ENCODE measurements at regions of chr3 and their contacts with region 1.

Region 1: GRCh38 chr3:109081746-109082510 is 36.0 kb downstream of the MORC1 start:
- DNase-seq: peak; percentile 10
- H3K4me3 ChIP-seq: no peak overlapping the region
- H3K27ac ChIP-seq: no peak overlapping the region
- H3K27me3 ChIP-seq: peaks cover 2% of the 10 kb centered on the region
- CTCF ChIP-seq: peak; percentile 90

Region 2: GRCh38 chr3:108662130-108662738 is 419.7 kb before region 1 on chr3:
- CTCF ChIA-PET with region 1: interaction called, 17 read pairs
- POLR2A ChIA-PET with region 1: no interaction called
- DNase-seq: peak; percentile 63
- H3K4me3 ChIP-seq: no peak overlapping the region
- H3K27ac ChIP-seq: no peak overlapping the region
- H3K27me3 ChIP-seq: no peaks in the 10 kb centered on the region
- CTCF ChIP-seq: peak; percentile 72

Region 3: GRCh38 chr3:109023656-109024254 is 58.2 kb before region 1 on chr3:
- CTCF ChIA-PET with region 1: interaction called, 53 read pairs
- POLR2A ChIA-PET with region 1: no interaction called
- DNase-seq: peak; percentile 13
- H3K4me3 ChIP-seq: no peak overlapping the region
- H3K27ac ChIP-seq: no peak overlapping the region
- H3K27me3 ChIP-seq: no peaks in the 10 kb centered on the region
- CTCF ChIP-seq: peak; percentile 77

Region 4: GRCh38 chr3:109059264-109059663 is 22.7 kb before region 1 on chr3:
- CTCF ChIA-PET with region 1: interaction called, 19 read pairs
- POLR2A ChIA-PET with region 1: no interaction called
- DNase-seq: no peak
- H3K4me3 ChIP-seq: no peak overlapping the region
- H3K27ac ChIP-seq: no peak overlapping the region
- H3K27me3 ChIP-seq: no peaks in the 10 kb centered on the region
- CTCF ChIP-seq: no peak

Measured in AG04450 (cell line).